Caco-2 (cell line): ENCODE measurements at regions of chr10 and their contacts with region 1.

Region 1: GRCh38 chr10:88196291-88196690 is 332.9 kb downstream of the PTEN start:
- DNase-seq: no peak
- H3K4me3 ChIP-seq: no peak overlapping the region
- H3K4me3 Mint-ChIP-seq: no peak overlapping the region
- H3K27ac Mint-ChIP-seq: no peak overlapping the region
- H3K4me1 ChIP-seq: peaks cover 6% of the 10 kb centered on the region
- H3K4me1 Mint-ChIP-seq: peaks cover 14% of the 10 kb centered on the region
- H3K27me3 ChIP-seq: no peaks in the 10 kb centered on the region
- H3K27me3 Mint-ChIP-seq: no peaks in the 10 kb centered on the region
- CTCF ChIP-seq: no peak

Region 2: DNA sequence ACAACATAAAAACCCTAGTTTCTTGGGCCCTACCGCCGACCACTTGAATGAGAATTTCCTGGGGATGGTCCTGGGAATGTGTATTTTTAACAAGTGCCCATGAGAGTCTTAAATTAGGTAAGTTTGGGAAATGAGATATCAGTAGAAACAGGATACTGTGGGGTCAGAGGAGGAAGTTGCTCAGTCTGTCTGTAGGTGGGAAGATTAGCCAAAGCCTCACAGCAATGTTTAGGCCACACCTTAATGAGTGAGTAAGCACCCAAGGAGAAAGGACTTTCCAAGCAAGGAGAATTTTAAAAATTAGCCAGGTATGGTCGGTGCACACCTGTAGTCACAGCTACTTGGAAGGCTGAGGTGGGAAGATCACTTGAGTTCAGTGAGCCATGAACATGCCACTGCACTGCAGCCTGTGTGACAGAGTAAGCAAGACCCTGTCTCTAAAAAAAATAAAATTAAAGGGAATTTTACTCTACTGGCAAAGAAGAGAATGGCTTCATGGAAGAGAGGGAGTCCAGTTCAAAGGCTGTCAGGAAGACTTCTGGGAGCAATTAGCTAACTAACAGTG is 504.7 kb before region 1 on chr10:
- CTCF ChIA-PET with region 1: no interaction called
- POLR2A ChIA-PET with region 1: no interaction called
- intact Hi-C with region 1: loop called (anchors 5 kb)
- DNase-seq: no peak
- H3K4me3 ChIP-seq: no peak overlapping the region
- H3K4me3 Mint-ChIP-seq: no peak overlapping the region
- H3K27ac Mint-ChIP-seq: no peak overlapping the region
- H3K4me1 ChIP-seq: peaks cover 16% of the 10 kb centered on the region
- H3K4me1 Mint-ChIP-seq: peaks cover 11% of the 10 kb centered on the region
- H3K27me3 ChIP-seq: no peaks in the 10 kb centered on the region
- H3K27me3 Mint-ChIP-seq: no peaks in the 10 kb centered on the region
- CTCF ChIP-seq: no peak

Region 3: GRCh38 chr10:87979847-87980246 is 216.4 kb before region 1 on chr10:
- CTCF ChIA-PET with region 1: no interaction called
- POLR2A ChIA-PET with region 1: no interaction called
- intact Hi-C with region 1: no loop called
- DNase-seq: no peak
- H3K4me3 ChIP-seq: no peak overlapping the region
- H3K4me3 Mint-ChIP-seq: no peak overlapping the region
- H3K27ac Mint-ChIP-seq: no peak overlapping the region
- H3K4me1 ChIP-seq: no peaks in the 10 kb centered on the region
- H3K4me1 Mint-ChIP-seq: no peaks in the 10 kb centered on the region
- H3K27me3 ChIP-seq: no peaks in the 10 kb centered on the region; the same call in 1 of the 2 replicates
- H3K27me3 Mint-ChIP-seq: no peaks in the 10 kb centered on the region
- CTCF ChIP-seq: no peak

Region 4: GRCh38 chr10:88004451-88004850 is 191.8 kb before region 1 on chr10:
- CTCF ChIA-PET with region 1: no interaction called
- POLR2A ChIA-PET with region 1: no interaction called
- intact Hi-C with region 1: no loop called
- DNase-seq: no peak
- H3K4me3 ChIP-seq: no peak overlapping the region
- H3K4me3 Mint-ChIP-seq: no peak overlapping the region
- H3K27ac Mint-ChIP-seq: no peak overlapping the region
- H3K4me1 ChIP-seq: no peaks in the 10 kb centered on the region
- H3K4me1 Mint-ChIP-seq: peaks cover 6% of the 10 kb centered on the region
- H3K27me3 ChIP-seq: no peaks in the 10 kb centered on the region
- H3K27me3 Mint-ChIP-seq: no peaks in the 10 kb centered on the region
- CTCF ChIP-seq: no peak